Caco-2 (cell line): ENCODE measurements at regions of chr6 and their contacts with region 1.

Region 1: GRCh38 chr6:35297601-35298481 is at the start of gene DEF6:
- DNase-seq: peak; percentile 83 to 87
- H3K4me3 ChIP-seq: peak within 1 kb of the TSS; percentile 57
- H3K4me3 Mint-ChIP-seq: peak within 1 kb of the TSS; percentile 55
- H3K27ac Mint-ChIP-seq: no peak within 1 kb of the TSS
- H3K4me1 ChIP-seq: peaks cover 5% of the 10 kb centered on the region; the same call in 1 of the 2 replicates
- H3K4me1 Mint-ChIP-seq: no peaks in the 10 kb centered on the region
- H3K27me3 ChIP-seq: no peaks in the 10 kb centered on the region
- H3K27me3 Mint-ChIP-seq: no peaks in the 10 kb centered on the region
- CTCF ChIP-seq: peak; percentile 64 to 85
- total RNA-seq, gene DEF6: 5.6 and 5.7 TPM in 2 replicates

Region 2: DNA sequence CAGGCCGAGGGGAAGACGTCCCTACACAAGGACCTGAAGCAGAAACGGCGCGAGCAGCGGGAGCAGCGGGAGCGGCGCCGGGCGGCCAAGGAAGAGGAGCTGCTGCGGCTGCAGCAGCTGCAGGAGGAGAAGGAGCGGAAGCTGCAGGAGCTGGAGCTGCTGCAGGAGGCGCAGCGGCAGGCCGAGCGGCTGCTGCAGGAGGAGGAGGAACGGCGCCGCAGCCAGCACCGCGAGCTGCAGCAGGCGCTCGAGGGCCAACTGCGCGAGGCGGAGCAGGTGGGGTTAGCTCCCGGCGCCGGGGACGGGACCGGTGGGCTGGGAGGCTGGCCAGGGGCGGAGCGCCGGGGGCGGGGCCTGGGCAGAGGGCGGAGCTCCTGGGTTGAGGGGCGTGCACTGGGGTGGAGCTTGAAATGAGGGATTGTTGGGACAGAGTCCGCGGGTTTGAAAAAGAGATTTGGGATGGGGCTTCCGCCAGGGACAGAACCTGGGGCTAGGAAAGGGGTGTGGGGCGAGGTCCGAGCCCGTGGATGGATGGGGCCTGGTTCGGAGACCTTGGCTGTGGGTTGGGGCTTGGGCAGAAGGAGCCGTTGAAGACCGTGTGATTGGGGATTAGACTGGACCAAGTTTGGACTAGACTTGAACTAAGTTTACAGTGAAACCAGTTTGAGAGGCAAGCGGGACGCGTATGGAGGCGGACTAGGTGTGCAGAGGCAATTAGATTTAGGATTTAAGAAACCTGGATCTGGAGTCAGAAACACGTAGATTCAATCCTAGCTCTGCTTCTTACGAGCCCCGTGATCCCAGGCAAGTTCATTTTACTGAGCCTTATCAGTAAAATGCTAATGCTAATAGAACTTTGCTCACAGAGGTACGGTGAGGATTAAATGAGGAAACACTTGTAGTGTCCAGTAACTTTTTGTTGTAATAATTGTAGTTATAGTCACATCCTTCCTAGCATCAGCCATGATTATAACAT is 20.6 kb after region 1 on chr6:
- CTCF ChIA-PET with region 1: interaction called, 12 read pairs
- POLR2A ChIA-PET with region 1: no interaction called
- intact Hi-C with region 1: loop called (anchors 1 kb)
- DNase-seq: peak; percentile 90 to 98
- H3K4me3 ChIP-seq: peak overlapping the region; percentile 59
- H3K4me3 Mint-ChIP-seq: peak overlapping the region; percentile 98
- H3K27ac Mint-ChIP-seq: peak overlapping the region; percentile 92
- H3K4me1 ChIP-seq: peaks cover 14% of the 10 kb centered on the region
- H3K4me1 Mint-ChIP-seq: peaks cover 15% of the 10 kb centered on the region
- H3K27me3 ChIP-seq: no peaks in the 10 kb centered on the region
- H3K27me3 Mint-ChIP-seq: no peaks in the 10 kb centered on the region
- CTCF ChIP-seq: peak in 1 of 2 experiments; percentile 3

Region 3: DNA sequence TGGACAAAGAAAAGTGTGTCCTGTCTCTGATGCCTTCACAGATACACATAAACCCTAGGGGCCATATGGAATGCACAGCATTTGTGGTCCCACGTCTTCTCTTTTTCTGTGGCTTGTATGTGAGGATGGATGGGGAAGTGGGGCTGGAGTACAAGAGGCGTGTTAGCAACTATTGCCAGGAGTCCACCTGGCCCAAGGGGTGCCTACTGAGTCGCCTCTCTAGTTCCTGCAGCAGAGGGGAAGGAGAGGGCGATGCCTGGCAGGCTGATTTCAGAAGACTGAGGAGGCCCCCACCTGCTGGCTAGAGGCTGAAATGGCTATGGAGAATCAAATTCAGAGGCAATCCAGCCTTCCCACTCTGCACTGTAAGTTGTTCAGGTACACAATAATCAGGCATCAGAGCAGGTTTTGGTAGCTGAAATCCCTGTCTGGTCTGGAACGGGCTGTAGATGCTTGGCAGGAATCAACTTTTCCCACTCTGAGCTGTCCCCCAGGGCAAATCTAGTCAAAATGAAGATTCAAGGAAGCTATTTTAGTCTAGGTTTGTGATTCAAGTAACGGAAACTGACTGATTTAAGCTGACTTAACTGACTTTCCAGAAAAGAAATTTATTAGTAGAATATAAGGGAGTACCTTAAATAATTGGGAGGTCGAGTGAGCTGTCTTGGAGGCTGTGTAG is 29.6 kb after region 1 on chr6:
- CTCF ChIA-PET with region 1: interaction called, 8 read pairs
- POLR2A ChIA-PET with region 1: no interaction called
- intact Hi-C with region 1: loop called (anchors 1 kb)
- DNase-seq: peak; percentile 74 to 78
- H3K4me3 ChIP-seq: no peak overlapping the region
- H3K4me3 Mint-ChIP-seq: no peak overlapping the region
- H3K27ac Mint-ChIP-seq: no peak overlapping the region
- H3K4me1 ChIP-seq: peaks cover 13% of the 10 kb centered on the region; the same call in 1 of the 2 replicates
- H3K4me1 Mint-ChIP-seq: peaks cover under 1% of the 10 kb centered on the region
- H3K27me3 ChIP-seq: no peaks in the 10 kb centered on the region
- H3K27me3 Mint-ChIP-seq: no peaks in the 10 kb centered on the region
- CTCF ChIP-seq: peak; percentile 65 to 81

Region 4: DNA sequence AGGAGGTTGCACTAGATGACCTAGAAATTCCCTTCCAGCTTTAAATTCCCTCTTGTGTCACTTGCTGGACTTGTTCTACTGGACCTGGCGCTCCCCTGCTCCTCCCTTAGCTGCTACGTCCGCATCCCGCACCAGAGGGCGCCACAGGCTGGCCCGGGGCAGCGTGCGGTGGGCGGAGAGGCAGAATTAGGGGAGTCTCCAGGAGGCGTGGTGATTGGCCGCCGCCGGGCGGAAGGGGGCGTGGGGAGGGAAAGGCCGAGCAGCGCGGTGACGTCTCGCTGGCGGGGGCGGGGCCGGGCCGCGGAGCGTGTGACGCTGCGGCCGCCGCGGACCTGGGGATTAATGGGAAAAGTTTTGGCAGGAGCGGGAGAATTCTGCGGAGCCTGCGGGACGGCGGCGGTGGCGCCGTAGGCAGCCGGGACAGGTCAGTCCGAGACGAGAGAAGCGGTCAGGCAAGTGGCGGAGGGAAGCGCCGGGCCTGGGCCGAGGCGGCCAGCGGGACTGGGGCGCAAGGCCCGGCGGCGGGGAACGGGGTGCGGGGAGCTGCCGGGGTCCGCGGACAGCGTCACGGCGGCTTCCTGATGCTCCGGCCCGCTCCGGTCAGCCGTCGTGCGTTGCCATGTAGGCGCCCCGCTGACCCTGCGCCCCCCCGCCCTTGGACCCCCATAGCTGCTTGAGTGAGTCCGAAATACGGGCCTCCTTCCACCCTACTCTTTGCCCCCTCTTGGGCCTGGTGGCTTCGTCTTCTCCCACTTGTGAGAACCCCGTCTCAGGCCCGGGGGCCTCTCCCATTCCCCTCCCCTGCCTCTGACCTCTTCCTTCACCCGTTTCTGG is 44.6 kb after region 1 on chr6 and contains the start of gene PPARD:
- CTCF ChIA-PET with region 1: interaction called, 4 read pairs
- POLR2A ChIA-PET with region 1: no interaction called
- intact Hi-C with region 1: loop called (anchors 1 kb)
- DNase-seq: peak; percentile 97 to 99
- H3K4me3 ChIP-seq: peak within 1 kb of the TSS; percentile 84
- H3K4me3 Mint-ChIP-seq: peak within 1 kb of the TSS; percentile 85
- H3K27ac Mint-ChIP-seq: peak within 1 kb of the TSS; percentile 78
- H3K4me1 ChIP-seq: peaks cover 6% of the 10 kb centered on the region
- H3K4me1 Mint-ChIP-seq: no peaks in the 10 kb centered on the region
- H3K27me3 ChIP-seq: no peaks in the 10 kb centered on the region
- H3K27me3 Mint-ChIP-seq: no peaks in the 10 kb centered on the region
- CTCF ChIP-seq: peak; percentile 88 to 97
- total RNA-seq, gene PPARD: 11.3 and 12.0 TPM in 2 replicates

Region 5: DNA sequence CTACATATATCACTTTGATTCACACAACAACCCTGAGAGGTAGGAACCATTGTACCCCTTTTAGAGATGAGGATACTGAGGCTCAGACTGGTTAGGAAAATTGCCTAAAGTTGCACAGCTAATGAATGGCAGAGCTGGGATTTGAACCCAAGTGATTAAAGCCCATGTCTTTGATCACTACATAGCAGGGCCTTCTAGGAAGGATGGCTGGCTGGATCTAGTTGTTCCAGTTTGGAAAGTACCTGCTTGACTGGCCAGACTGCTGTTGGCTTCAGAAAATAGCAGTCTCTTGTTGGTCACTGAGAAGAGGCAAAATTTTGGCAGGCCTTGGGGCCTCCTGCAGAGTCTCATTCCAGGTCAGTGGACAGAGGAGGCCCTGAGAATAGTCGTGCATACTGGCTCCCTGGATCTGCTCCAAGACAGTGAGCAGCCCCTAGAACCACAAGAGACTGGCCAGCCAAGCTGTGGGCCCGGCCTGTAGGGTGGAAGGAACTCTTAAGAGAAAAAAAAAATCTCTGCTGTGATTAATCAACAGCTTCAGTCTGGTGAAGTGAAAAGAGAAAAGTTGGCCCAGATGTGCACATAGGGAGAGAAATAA is 62.0 kb after region 1 on chr6:
- CTCF ChIA-PET with region 1: no interaction called
- POLR2A ChIA-PET with region 1: no interaction called
- intact Hi-C with region 1: no loop called
- DNase-seq: no peak
- H3K4me3 ChIP-seq: no peak overlapping the region
- H3K4me3 Mint-ChIP-seq: no peak overlapping the region
- H3K27ac Mint-ChIP-seq: no peak overlapping the region
- H3K4me1 ChIP-seq: peaks cover 12% of the 10 kb centered on the region; the same call in 1 of the 2 replicates
- H3K4me1 Mint-ChIP-seq: peaks cover 8% of the 10 kb centered on the region
- H3K27me3 ChIP-seq: no peaks in the 10 kb centered on the region
- H3K27me3 Mint-ChIP-seq: no peaks in the 10 kb centered on the region
- CTCF ChIP-seq: no peak

Region 6: GRCh38 chr6:35468181-35468979 is 170.5 kb after region 1 on chr6 and contains the start of gene RPL10A:
- CTCF ChIA-PET with region 1: interaction called, 4 read pairs
- POLR2A ChIA-PET with region 1: interaction called, 5 read pairs
- intact Hi-C with region 1: loop called (anchors 1 kb)
- DNase-seq: peak; percentile 94 to 95
- H3K4me3 ChIP-seq: peak within 1 kb of the TSS; percentile 86
- H3K4me3 Mint-ChIP-seq: peak within 1 kb of the TSS; percentile 86
- H3K27ac Mint-ChIP-seq: peak within 1 kb of the TSS; percentile 88
- H3K4me1 ChIP-seq: peaks cover 30% of the 10 kb centered on the region
- H3K4me1 Mint-ChIP-seq: peaks cover 20% of the 10 kb centered on the region
- H3K27me3 ChIP-seq: no peaks in the 10 kb centered on the region
- H3K27me3 Mint-ChIP-seq: no peaks in the 10 kb centered on the region
- CTCF ChIP-seq: peak; percentile 94 to 96
- total RNA-seq, gene RPL10A: 1,082 and 1,106 TPM in 2 replicates

Region 7: DNA sequence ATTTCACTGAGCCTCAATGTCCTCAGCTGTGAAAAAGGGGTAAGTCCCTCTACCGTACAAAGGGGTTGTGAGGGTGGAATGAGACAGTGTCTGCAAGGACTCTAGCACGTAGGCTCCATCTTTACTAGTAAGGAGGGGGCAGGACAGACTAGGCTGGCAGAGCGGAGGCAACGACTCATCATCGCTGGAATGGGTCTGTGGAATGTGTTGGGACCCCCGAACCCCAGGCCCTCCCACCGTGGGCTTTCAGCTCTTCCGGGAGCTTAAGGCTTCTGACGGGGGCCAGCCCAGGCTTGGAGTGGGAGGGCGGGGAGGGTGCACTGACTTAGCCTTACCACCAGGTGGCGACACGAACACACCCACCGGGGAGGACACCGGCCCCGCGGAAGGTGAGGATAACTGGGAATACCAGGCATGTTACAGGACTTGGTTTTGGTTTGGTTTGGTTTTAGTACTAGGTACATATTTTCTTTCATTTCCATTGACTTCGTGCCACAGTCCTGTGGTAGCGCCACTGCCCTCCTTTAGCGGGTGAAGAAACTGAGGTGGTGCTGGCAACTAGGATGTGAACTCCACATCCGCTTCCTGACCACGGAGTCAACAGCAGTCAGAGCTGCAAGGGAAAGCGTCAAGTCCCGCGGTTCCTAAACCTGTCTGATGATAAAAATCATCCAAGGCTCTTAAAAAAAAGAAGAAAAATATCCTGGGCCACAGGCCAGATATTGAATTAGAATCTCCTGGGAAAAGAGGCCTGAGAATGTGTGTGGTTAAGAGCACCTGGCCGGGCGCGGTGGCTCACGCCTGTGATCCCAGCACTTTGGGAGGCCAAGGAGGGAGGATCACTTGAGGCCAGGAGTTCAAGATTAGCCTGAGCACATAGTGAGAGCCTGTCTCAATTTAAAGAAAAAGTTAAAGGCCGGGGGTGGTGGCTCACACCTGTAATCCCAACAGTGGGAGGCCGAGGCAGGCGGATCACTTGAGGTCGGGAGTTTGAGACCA is 225.1 kb after region 1 on chr6:
- CTCF ChIA-PET with region 1: no interaction called
- POLR2A ChIA-PET with region 1: no interaction called
- intact Hi-C with region 1: loop called (anchors 10 kb)
- DNase-seq: peak; percentile 71 to 74
- H3K4me3 ChIP-seq: no peak overlapping the region
- H3K4me3 Mint-ChIP-seq: no peak overlapping the region
- H3K27ac Mint-ChIP-seq: no peak overlapping the region
- H3K4me1 ChIP-seq: peaks cover 11% of the 10 kb centered on the region; the same call in 1 of the 2 replicates
- H3K4me1 Mint-ChIP-seq: peaks cover 7% of the 10 kb centered on the region
- H3K27me3 ChIP-seq: no peaks in the 10 kb centered on the region
- H3K27me3 Mint-ChIP-seq: no peaks in the 10 kb centered on the region
- CTCF ChIP-seq: peak; percentile 93 to 96

Region 8: GRCh38 chr6:35731736-35732532 is 434.1 kb after region 1 on chr6:
- CTCF ChIA-PET with region 1: no interaction called
- POLR2A ChIA-PET with region 1: no interaction called
- intact Hi-C with region 1: loop called (anchors 10 kb)
- DNase-seq: peak; percentile 90 to 91
- H3K4me3 ChIP-seq: peak overlapping the region; percentile 62
- H3K4me3 Mint-ChIP-seq: peak overlapping the region; percentile 82
- H3K27ac Mint-ChIP-seq: peak overlapping the region; percentile 45
- H3K4me1 ChIP-seq: peaks cover 42% of the 10 kb centered on the region
- H3K4me1 Mint-ChIP-seq: peaks cover 14% of the 10 kb centered on the region
- H3K27me3 ChIP-seq: no peaks in the 10 kb centered on the region
- H3K27me3 Mint-ChIP-seq: no peaks in the 10 kb centered on the region
- CTCF ChIP-seq: peak in 1 of 2 experiments; percentile 3